Common myeloid progenitor, CD34-positive (primary cell): ENCODE measurements at regions of chr9 and their contacts with region 1.

Region 1: GRCh38 chr9:71716138-71716909 is 52.0 kb downstream of the CEMIP2 start:
- DNase-seq: peak; percentile 15 to 40 (median 33)
- H3K4me3 ChIP-seq: no peak overlapping the region
- H3K27ac ChIP-seq: no peak overlapping the region
- H3K4me1 ChIP-seq: peaks cover 0 to 7% (median 1%) of the 10 kb centered on the region in 4 experiments
- H3K27me3 ChIP-seq: no peaks in the 10 kb centered on the region

Region 2: GRCh38 chr9:71604197-71605063 is 111.9 kb before region 1 on chr9:
- CTCF ChIA-PET with region 1: interaction called, 43 read pairs
- POLR2A ChIA-PET with region 1: no interaction called
- DNase-seq: peak; percentile 73 to 85 (median 81)
- H3K4me3 ChIP-seq: no peak overlapping the region
- H3K27ac ChIP-seq: no peak overlapping the region
- H3K4me1 ChIP-seq: no peaks in the 10 kb centered on the region
- H3K27me3 ChIP-seq: no peaks in the 10 kb centered on the region

Region 3: DNA sequence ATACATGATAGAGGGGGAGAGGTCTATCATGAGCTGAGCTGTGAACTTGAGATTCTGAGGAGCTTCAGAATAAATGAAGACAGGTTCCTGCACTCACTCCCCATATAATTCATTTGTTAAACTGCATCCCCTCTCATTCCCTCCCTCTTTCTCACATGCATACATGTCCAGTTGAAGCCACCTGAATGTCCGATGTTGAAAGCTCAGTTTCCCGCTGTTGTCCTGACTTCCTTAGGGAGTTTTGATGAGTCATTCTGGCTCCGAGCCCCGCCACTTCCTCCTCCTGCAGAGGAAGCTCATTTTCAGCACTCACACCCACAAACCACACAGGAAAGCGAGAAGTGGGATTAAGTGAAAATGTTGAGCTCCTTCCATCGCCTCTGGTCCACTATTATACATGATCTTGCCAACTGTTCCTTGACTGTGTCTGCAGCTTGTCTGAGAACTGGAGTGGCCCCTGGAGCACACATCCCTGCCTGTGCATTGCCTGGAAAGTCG is 69.2 kb before region 1 on chr9:
- CTCF ChIA-PET with region 1: interaction called, 13 read pairs
- POLR2A ChIA-PET with region 1: no interaction called
- DNase-seq: peak; percentile 83 to 85 (median 84)
- H3K4me3 ChIP-seq: peak overlapping the region in 4 of 7 experiments; percentile 12 to 50 (median 33)
- H3K27ac ChIP-seq: no peak overlapping the region
- H3K4me1 ChIP-seq: peaks cover 11 to 51% (median 40%) of the 10 kb centered on the region in 4 experiments
- H3K27me3 ChIP-seq: no peaks in the 10 kb centered on the region

Region 4: GRCh38 chr9:71683598-71684235 is 32.6 kb before region 1 on chr9:
- CTCF ChIA-PET with region 1: interaction called, 26 read pairs
- POLR2A ChIA-PET with region 1: interaction called, 3 read pairs
- DNase-seq: peak; percentile 78 to 89 (median 86)
- H3K4me3 ChIP-seq: peak overlapping the region in 1 of 7 experiments; percentile 3
- H3K27ac ChIP-seq: no peak overlapping the region
- H3K4me1 ChIP-seq: peaks cover 19 to 62% (median 40%) of the 10 kb centered on the region in 4 experiments
- H3K27me3 ChIP-seq: no peaks in the 10 kb centered on the region

Region 5: GRCh38 chr9:71768388-71769174 is 52.3 kb after region 1 on chr9 and contains the start of gene CEMIP2:
- CTCF ChIA-PET with region 1: interaction called, 19 read pairs
- POLR2A ChIA-PET with region 1: interaction called, 6 read pairs
- DNase-seq: peak; percentile 90 to 96 (median 95)
- H3K4me3 ChIP-seq: peak within 1 kb of the TSS; percentile 72 to 98 (median 90)
- H3K27ac ChIP-seq: peak within 1 kb of the TSS; percentile 66 to 77
- H3K4me1 ChIP-seq: peaks cover 22 to 54% (median 41%) of the 10 kb centered on the region in 4 experiments
- H3K27me3 ChIP-seq: no peaks in the 10 kb centered on the region